Endothelial cell of umbilical vein (primary cell): ENCODE measurements at regions of chr22 and their contacts with region 1.

Region 1: GRCh38 chr22:30289134-30289979 is at the start of gene CASTOR1:
- DNase-seq: peak; percentile 99
- H3K4me3 ChIP-seq: peak within 1 kb of the TSS; percentile 54 to 84 (median 64)
- H3K27ac ChIP-seq: peak within 1 kb of the TSS; percentile 51
- H3K4me1 ChIP-seq: peaks cover 28% of the 10 kb centered on the region
- H3K27me3 ChIP-seq: no peaks in the 10 kb centered on the region
- CTCF ChIP-seq: no peak
- POLR2A ChIP-seq: peak; percentile 60
- total RNA-seq, gene CASTOR1: 7.2 and 8.1 TPM in 2 replicates

Region 2: GRCh38 chr22:29480512-29481264 is 808.7 kb before region 1 on chr22:
- CTCF ChIA-PET with region 1: no interaction called
- POLR2A ChIA-PET with region 1: no interaction called
- dilution Hi-C with region 1: no loop called
- intact Hi-C with region 1: no loop called
- DNase-seq: peak; percentile 41
- H3K4me3 ChIP-seq: no peak overlapping the region
- H3K27ac ChIP-seq: no peak overlapping the region
- H3K4me1 ChIP-seq: peaks cover 5% of the 10 kb centered on the region
- H3K27me3 ChIP-seq: peaks cover 48% of the 10 kb centered on the region in 2 experiments
- CTCF ChIP-seq: no peak
- POLR2A ChIP-seq: no peak

Region 3: GRCh38 chr22:29937940-29938693 is 351.2 kb before region 1 on chr22:
- CTCF ChIA-PET with region 1: no interaction called
- POLR2A ChIA-PET with region 1: no interaction called
- dilution Hi-C with region 1: no loop called
- intact Hi-C with region 1: no loop called
- DNase-seq: no peak
- H3K4me3 ChIP-seq: no peak overlapping the region
- H3K27ac ChIP-seq: no peak overlapping the region
- H3K4me1 ChIP-seq: peaks cover 3% of the 10 kb centered on the region
- H3K27me3 ChIP-seq: no peaks in the 10 kb centered on the region
- CTCF ChIP-seq: no peak
- POLR2A ChIP-seq: no peak

Region 4: GRCh38 chr22:30253205-30253852 is 36.0 kb before region 1 on chr22:
- CTCF ChIA-PET with region 1: interaction called, 16 read pairs
- POLR2A ChIA-PET with region 1: no interaction called
- dilution Hi-C with region 1: no loop called
- intact Hi-C with region 1: loop called (anchors 1 kb)
- DNase-seq: no peak
- H3K4me3 ChIP-seq: no peak overlapping the region
- H3K27ac ChIP-seq: no peak overlapping the region
- H3K4me1 ChIP-seq: peaks cover 5% of the 10 kb centered on the region
- H3K27me3 ChIP-seq: peaks cover 0 to 4% of the 10 kb centered on the region in 2 experiments
- CTCF ChIP-seq: no peak
- POLR2A ChIP-seq: no peak

Region 5: GRCh38 chr22:30305519-30305905 is 16.2 kb after region 1 on chr22:
- CTCF ChIA-PET with region 1: interaction called, 39 read pairs
- POLR2A ChIA-PET with region 1: interaction called, 4 read pairs
- dilution Hi-C with region 1: no loop called
- intact Hi-C with region 1: loop called (anchors 1 kb)
- DNase-seq: peak; percentile 55
- H3K4me3 ChIP-seq: no peak overlapping the region
- H3K27ac ChIP-seq: peak overlapping the region; percentile 41
- H3K4me1 ChIP-seq: peaks cover 36% of the 10 kb centered on the region
- H3K27me3 ChIP-seq: no peaks in the 10 kb centered on the region
- CTCF ChIP-seq: no peak
- POLR2A ChIP-seq: peak; percentile 41

Region 6: DNA sequence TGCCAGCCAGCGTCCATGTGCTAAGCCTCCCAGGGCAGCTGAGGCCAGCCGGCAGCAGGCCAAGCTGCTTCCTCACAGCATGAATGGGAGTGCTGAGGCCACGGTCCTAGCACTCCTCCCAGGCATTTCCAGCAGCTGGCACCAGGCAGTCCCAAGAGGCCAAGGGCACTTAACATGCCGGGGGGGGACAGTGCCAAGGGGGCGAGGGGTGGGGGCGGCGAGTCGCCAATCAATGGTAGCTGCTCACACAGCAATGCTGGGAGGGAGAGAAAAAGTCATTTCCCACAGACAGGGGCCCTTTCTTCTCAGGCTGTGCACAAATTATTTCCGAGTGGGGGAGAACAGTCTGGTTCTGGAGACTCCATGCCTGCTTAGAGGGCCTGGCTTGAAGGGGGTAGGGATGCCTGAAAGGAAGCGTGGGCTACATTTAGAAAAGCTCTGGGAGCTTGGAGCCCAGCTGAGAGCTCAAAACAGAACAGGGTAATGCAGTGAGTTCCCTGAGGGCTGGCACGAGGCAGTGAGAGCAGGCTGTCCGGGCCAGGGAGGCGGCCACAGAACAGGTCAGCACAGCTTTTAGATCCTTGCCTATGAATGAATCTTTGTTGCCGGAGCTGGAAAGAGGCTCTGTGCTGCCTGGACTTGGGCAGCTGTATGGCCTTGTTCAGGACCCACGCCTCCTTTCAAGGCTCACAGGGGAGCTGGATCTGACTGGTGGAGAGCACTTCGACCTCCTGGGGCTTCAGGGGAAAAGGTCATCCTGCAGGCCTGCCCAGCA is 51.7 kb after region 1 on chr22:
- CTCF ChIA-PET with region 1: interaction called, 164 read pairs
- POLR2A ChIA-PET with region 1: no interaction called
- dilution Hi-C with region 1: no loop called
- intact Hi-C with region 1: no loop called
- DNase-seq: no peak
- H3K4me3 ChIP-seq: no peak overlapping the region
- H3K27ac ChIP-seq: no peak overlapping the region
- H3K4me1 ChIP-seq: no peaks in the 10 kb centered on the region
- H3K27me3 ChIP-seq: no peaks in the 10 kb centered on the region
- CTCF ChIP-seq: no peak
- POLR2A ChIP-seq: no peak

Region 7: DNA sequence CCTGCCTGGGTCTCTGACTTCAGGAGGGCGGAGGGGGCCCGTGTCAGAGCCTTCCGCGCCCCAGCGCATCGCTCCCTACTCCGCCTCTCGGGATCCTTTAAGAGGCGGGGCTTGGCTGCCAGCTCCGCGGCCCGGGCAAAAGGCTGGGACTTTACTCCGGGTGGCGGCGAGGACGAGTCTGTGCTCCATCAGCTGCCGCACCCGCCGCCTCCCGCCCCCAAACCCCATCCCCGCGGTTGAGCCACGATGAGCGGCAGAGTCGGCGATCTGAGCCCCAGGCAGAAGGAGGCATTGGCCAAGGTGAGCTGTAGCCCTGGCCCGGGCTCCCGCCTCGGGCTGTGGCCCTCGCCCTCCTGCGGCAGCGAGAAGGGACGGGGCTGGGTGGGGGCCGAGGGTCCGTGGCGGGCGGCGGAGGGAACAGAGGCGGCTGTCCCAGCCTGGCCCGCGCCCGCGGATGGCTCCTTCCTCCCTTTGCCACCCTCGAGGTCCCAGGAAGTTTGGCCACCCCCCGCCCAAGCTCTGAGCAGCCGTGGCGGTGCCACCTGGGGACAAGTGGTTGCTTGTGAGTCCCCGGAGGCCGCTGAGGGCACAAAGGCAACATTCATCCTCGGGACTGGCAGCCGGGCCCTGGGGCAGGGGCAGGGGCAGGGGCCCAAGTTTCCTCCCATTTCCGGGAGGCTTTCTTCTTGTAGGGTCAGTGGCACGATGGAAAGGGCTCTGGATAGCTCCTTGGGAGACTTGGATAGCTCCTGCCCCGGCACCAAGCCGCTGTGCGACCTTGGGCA is 107.7 kb after region 1 on chr22 and contains the start of gene SEC14L2:
- CTCF ChIA-PET with region 1: interaction called, 18 read pairs
- POLR2A ChIA-PET with region 1: no interaction called
- dilution Hi-C with region 1: no loop called
- intact Hi-C with region 1: no loop called
- DNase-seq: peak; percentile 52
- H3K4me3 ChIP-seq: peak within 1 kb of the TSS; percentile 61 to 86 (median 79)
- H3K27ac ChIP-seq: no peak within 1 kb of the TSS
- H3K4me1 ChIP-seq: peaks cover 16% of the 10 kb centered on the region
- H3K27me3 ChIP-seq: no peaks in the 10 kb centered on the region
- CTCF ChIP-seq: no peak
- POLR2A ChIP-seq: peak; percentile 66
- total RNA-seq, gene SEC14L2: 22.7 and 28.8 TPM in 2 replicates